ENCODE measurements at regions of chr7 and their contacts with region 1.

Region 1: GRCh38 chr7:120293027-120293426 is 20.1 kb downstream of the KCND2 start:
- DNase-seq: no peak
- ATAC-seq: peak; percentile 85
- H3K4me3 ChIP-seq: no peak overlapping the region
- H3K27ac ChIP-seq: no peak overlapping the region
- H3K4me1 ChIP-seq: no peaks in the 10 kb centered on the region
- H3K27me3 ChIP-seq: no peaks in the 10 kb centered on the region
- CTCF ChIP-seq: no peak

Region 2: DNA sequence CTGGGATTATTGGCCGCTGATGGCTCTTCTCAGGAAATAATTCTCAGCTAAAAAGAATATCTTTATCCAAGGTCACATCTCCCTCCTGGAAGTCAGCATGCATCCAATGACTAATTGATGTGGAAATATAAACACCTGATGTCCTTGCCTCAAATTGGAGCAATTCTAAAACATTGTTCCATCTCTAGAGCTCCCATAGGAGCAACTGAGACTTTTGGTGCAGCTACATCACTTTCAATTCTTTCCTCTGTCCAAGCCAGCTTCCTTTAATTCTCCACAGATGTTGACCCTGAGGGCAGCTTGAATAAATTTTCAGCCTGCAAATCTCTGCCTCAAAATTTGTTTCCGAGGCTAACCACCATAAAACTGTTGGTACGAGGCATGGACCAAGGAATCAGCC is 63.9 kb before region 1 on chr7:
- CTCF ChIA-PET with region 1: no interaction called
- POLR2A ChIA-PET with region 1: no interaction called
- intact Hi-C with region 1: loop called (anchors 2 kb)
- DNase-seq: no peak
- ATAC-seq: no peak
- H3K4me3 ChIP-seq: no peak overlapping the region
- H3K27ac ChIP-seq: no peak overlapping the region
- H3K4me1 ChIP-seq: no peaks in the 10 kb centered on the region
- H3K27me3 ChIP-seq: no peaks in the 10 kb centered on the region
- CTCF ChIP-seq: no peak

Region 3: GRCh38 chr7:121006711-121007315 is 713.8 kb after region 1 on chr7:
- CTCF ChIA-PET with region 1: no interaction called
- POLR2A ChIA-PET with region 1: no interaction called
- intact Hi-C with region 1: no loop called
- DNase-seq: no peak
- ATAC-seq: no peak
- H3K4me3 ChIP-seq: no peak overlapping the region
- H3K27ac ChIP-seq: no peak overlapping the region
- H3K4me1 ChIP-seq: peaks cover 19% of the 10 kb centered on the region
- H3K27me3 ChIP-seq: no peaks in the 10 kb centered on the region
- CTCF ChIP-seq: no peak